WTC11 (cell line): ENCODE measurements at regions of chr4 and their contacts with region 1.

Region 1: GRCh38 chr4:121192480-121192879 is 28.4 kb upstream of the TNIP3 start:
- DNase-seq: no peak
- ATAC-seq: peak; percentile 59
- H3K4me3 Mint-ChIP-seq: no peak overlapping the region
- H3K27ac Mint-ChIP-seq: no peak overlapping the region
- H3K4me1 Mint-ChIP-seq: peaks cover 19% of the 10 kb centered on the region
- H3K27me3 Mint-ChIP-seq: no peaks in the 10 kb centered on the region
- CTCF ChIP-seq: 0 out of 2 replicates have a peak, but pooled peaks have one; percentile 40

Region 2: GRCh38 chr4:120753854-120754253 is 438.6 kb before region 1 on chr4:
- CTCF ChIA-PET with region 1: no interaction called
- POLR2A ChIA-PET with region 1: no interaction called
- DNase-seq: no peak
- ATAC-seq: no peak
- H3K4me3 Mint-ChIP-seq: no peak overlapping the region
- H3K27ac Mint-ChIP-seq: no peak overlapping the region
- H3K4me1 Mint-ChIP-seq: peaks cover 6% of the 10 kb centered on the region; the same call in 1 of the 2 replicates
- H3K27me3 Mint-ChIP-seq: no peaks in the 10 kb centered on the region
- CTCF ChIP-seq: no peak

Region 3: DNA sequence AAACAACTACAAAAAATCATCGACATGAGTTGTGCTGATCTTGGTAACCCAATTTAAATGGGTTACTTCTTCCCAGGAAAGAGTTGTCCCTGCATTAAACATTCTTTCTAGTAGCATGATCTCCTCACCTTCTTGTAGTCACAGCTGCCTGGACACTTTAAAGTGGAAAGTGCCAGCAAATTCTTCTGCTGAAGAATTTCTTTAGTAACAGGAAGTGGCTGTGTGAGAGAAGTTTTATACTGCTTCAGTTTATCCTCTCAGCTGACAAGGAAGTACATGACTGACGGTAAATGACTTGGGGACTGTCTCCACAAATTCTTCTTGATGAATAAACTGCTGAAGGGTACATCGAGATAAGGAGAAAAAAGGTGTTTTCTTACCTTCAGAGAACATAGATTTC is 10.2 kb before region 1 on chr4:
- CTCF ChIA-PET with region 1: interaction called, 24 read pairs
- POLR2A ChIA-PET with region 1: no interaction called
- DNase-seq: no peak
- ATAC-seq: no peak
- H3K4me3 Mint-ChIP-seq: no peak overlapping the region
- H3K27ac Mint-ChIP-seq: no peak overlapping the region
- H3K4me1 Mint-ChIP-seq: peaks cover 23% of the 10 kb centered on the region
- H3K27me3 Mint-ChIP-seq: no peaks in the 10 kb centered on the region; the same call in 1 of the 2 replicates
- CTCF ChIP-seq: no peak

Region 4: GRCh38 chr4:121252224-121252806 is 59.8 kb after region 1 on chr4:
- CTCF ChIA-PET with region 1: interaction called, 35 read pairs
- POLR2A ChIA-PET with region 1: interaction called, 4 read pairs
- DNase-seq: peak; percentile 73
- ATAC-seq: peak; percentile 97
- H3K4me3 Mint-ChIP-seq: no peak overlapping the region
- H3K27ac Mint-ChIP-seq: no peak overlapping the region
- H3K4me1 Mint-ChIP-seq: peaks cover 6% of the 10 kb centered on the region; the same call in 1 of the 2 replicates
- H3K27me3 Mint-ChIP-seq: no peaks in the 10 kb centered on the region
- CTCF ChIP-seq: peak; percentile 70

Region 5: GRCh38 chr4:121307445-121308327 is 115.2 kb after region 1 on chr4:
- CTCF ChIA-PET with region 1: interaction called, 13 read pairs
- POLR2A ChIA-PET with region 1: no interaction called
- DNase-seq: peak; percentile 45
- ATAC-seq: peak; percentile 78
- H3K4me3 Mint-ChIP-seq: no peak overlapping the region
- H3K27ac Mint-ChIP-seq: no peak overlapping the region
- H3K4me1 Mint-ChIP-seq: no peaks in the 10 kb centered on the region
- H3K27me3 Mint-ChIP-seq: no peaks in the 10 kb centered on the region
- CTCF ChIP-seq: peak; percentile 55

Region 6: DNA sequence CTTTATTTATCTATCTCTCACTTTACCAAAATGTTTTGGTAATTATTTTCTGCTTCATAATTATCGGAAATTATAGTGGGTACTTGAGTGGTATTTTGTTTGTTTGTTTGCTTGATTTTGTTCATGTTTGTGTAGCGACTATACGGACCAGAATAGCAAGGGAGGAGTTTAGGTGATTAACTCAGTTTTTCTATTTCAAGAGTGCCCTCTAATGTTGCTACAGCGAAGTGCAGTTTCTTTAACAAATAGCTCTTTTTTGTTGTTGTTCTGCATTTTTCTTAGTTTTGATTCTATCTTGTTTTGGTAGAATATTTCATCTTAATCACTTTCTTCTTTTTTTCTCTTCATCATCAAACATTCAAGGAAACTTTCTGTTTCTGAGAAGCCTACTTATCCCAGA is 229.1 kb after region 1 on chr4:
- CTCF ChIA-PET with region 1: interaction called, 10 read pairs
- POLR2A ChIA-PET with region 1: no interaction called
- DNase-seq: no peak
- ATAC-seq: peak; percentile 36; the same call in 1 of the 2 replicates
- H3K4me3 Mint-ChIP-seq: no peak overlapping the region
- H3K27ac Mint-ChIP-seq: no peak overlapping the region
- H3K4me1 Mint-ChIP-seq: no peaks in the 10 kb centered on the region
- H3K27me3 Mint-ChIP-seq: no peaks in the 10 kb centered on the region
- CTCF ChIP-seq: no peak